Activated naive CD4-positive, alpha-beta T cell treated with anti-CD3 and anti-CD28 coated beads for 36 hours (primary cell): ENCODE measurements at regions of chr15 and their contacts with region 1.

Region 1: DNA sequence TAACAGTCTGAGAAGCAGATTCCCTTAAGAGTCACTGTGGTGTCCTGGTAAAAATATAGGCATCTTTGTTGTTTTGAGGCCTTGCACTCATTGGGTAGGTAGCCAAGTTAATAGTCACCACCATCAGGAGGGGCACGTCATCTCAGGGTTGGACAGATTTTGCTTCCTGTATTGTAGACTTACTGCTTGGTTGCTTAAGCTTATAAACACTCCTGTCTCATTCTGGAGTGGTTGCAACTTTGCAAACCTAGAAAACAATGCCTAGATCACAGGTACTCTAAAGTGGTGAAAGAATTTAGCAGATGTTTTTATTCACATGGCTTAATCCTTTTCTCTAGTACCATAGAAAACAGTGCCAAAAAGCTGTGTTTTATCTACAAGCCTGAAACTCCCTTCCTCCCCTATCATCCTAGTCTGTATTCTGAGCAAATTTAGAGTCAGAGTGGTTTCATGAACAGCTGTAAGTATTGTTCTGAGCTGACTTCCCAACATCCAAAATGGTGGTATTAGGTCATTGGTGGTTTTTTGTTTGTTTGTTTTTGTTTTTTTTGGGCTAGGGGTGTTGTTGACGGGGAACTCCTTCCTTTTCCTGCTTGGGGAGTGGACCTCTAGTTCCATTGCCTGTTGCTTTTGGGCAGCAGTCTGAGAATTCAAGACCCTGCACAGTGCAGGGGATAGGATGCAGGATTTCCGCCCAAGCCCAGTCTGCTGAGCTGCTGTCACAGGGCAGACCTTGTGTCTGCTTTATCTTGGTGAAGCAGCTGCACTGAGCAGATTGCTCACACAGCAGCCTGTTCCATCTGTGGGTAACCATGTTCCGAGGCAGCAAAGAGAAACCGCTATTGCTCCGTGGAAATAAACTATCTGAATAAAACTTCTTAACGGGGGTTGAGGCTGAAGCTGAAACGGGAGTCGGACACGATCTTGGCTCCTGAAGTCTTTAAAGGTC is 202.0 kb downstream of the AKAP13 start:
- DNase-seq: peak; percentile 77
- H3K4me3 Mint-ChIP-seq: peak overlapping the region; percentile 71
- H3K27ac Mint-ChIP-seq: peak overlapping the region; percentile 85
- H3K4me1 Mint-ChIP-seq: peaks cover 68% of the 10 kb centered on the region
- H3K27me3 Mint-ChIP-seq: no peaks in the 10 kb centered on the region

Region 2: GRCh38 chr15:85296615-85297402 is 285.6 kb before region 1 on chr15:
- CTCF ChIA-PET with region 1: no interaction called
- intact Hi-C with region 1: loop called (anchors 5 kb)
- DNase-seq: peak; percentile 85
- H3K4me3 Mint-ChIP-seq: peak overlapping the region; percentile 51
- H3K27ac Mint-ChIP-seq: no peak overlapping the region
- H3K4me1 Mint-ChIP-seq: peaks cover 10% of the 10 kb centered on the region
- H3K27me3 Mint-ChIP-seq: no peaks in the 10 kb centered on the region

Region 3: GRCh38 chr15:85485956-85486567 is 96.3 kb before region 1 on chr15:
- CTCF ChIA-PET with region 1: interaction called, 5 read pairs
- intact Hi-C with region 1: loop called (anchors 1 kb)
- DNase-seq: peak; percentile 76
- H3K4me3 Mint-ChIP-seq: no peak overlapping the region
- H3K27ac Mint-ChIP-seq: no peak overlapping the region
- H3K4me1 Mint-ChIP-seq: peaks cover 61% of the 10 kb centered on the region
- H3K27me3 Mint-ChIP-seq: no peaks in the 10 kb centered on the region

Region 4: GRCh38 chr15:85555875-85556617 is 26.4 kb before region 1 on chr15:
- CTCF ChIA-PET with region 1: interaction called, 5 read pairs
- intact Hi-C with region 1: loop called (anchors 1 kb)
- DNase-seq: no peak
- H3K4me3 Mint-ChIP-seq: no peak overlapping the region
- H3K27ac Mint-ChIP-seq: peak overlapping the region; percentile 48
- H3K4me1 Mint-ChIP-seq: peaks cover 52% of the 10 kb centered on the region
- H3K27me3 Mint-ChIP-seq: no peaks in the 10 kb centered on the region

Region 5: GRCh38 chr15:85625856-85626255 is 43.5 kb after region 1 on chr15:
- CTCF ChIA-PET with region 1: interaction called, 5 read pairs
- intact Hi-C with region 1: loop called (anchors 1 kb)
- DNase-seq: peak; percentile 43
- H3K4me3 Mint-ChIP-seq: no peak overlapping the region
- H3K27ac Mint-ChIP-seq: no peak overlapping the region
- H3K4me1 Mint-ChIP-seq: peaks cover 43% of the 10 kb centered on the region
- H3K27me3 Mint-ChIP-seq: no peaks in the 10 kb centered on the region

Region 6: GRCh38 chr15:85689729-85690128 is 107.3 kb after region 1 on chr15:
- CTCF ChIA-PET with region 1: no interaction called
- intact Hi-C with region 1: loop called (anchors 1 kb)
- DNase-seq: peak; percentile 76
- H3K4me3 Mint-ChIP-seq: peak overlapping the region; percentile 84
- H3K27ac Mint-ChIP-seq: peak overlapping the region; percentile 99
- H3K4me1 Mint-ChIP-seq: peaks cover 78% of the 10 kb centered on the region
- H3K27me3 Mint-ChIP-seq: no peaks in the 10 kb centered on the region